ENCODE measurements at regions of chr10 and their contacts with region 1.

Region 1: DNA sequence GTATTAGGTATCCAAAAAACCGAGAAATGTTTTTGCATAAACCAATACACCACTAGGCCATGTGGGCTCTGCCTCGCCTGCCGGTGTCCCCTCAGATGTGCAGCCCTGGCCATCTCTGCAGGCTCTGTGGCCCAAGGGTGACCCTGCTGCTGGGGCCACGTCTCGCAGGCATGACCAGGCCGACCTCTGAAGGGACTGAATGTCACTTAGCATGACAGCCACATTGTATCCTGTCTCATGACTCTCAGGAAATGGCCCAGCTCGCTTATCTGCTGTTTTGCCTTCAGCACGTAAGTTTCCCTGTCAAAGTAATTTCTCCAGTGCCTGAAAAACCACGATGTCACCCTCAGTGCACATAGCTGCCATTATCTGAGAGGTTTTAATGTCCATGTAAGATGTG is 49.5 kb upstream of the ZNF32 start:
- DNase-seq: no peak
- ATAC-seq: peak; percentile 39 to 59 (median 50)
- H3K4me3 ChIP-seq: no peak overlapping the region
- H3K27ac ChIP-seq: peak overlapping the region in 5 of 10 donors; percentile 30 to 59 (median 49)
- H3K4me1 ChIP-seq: peaks cover 10 to 73% (median 35%) of the 10 kb centered on the region in 9 donors
- H3K27me3 ChIP-seq: no peaks in the 10 kb centered on the region
- CTCF ChIP-seq: no peak

Region 2: GRCh38 chr10:43380610-43381222 is 317.4 kb before region 1 on chr10:
- intact Hi-C with region 1: no loop called
- DNase-seq: no peak
- ATAC-seq: no peak
- H3K4me3 ChIP-seq: no peak overlapping the region
- H3K27ac ChIP-seq: no peak overlapping the region
- H3K4me1 ChIP-seq: peaks cover 0 to 11% (median 0%) of the 10 kb centered on the region in 9 donors
- H3K27me3 ChIP-seq: no peaks in the 10 kb centered on the region
- CTCF ChIP-seq: no peak

Region 3: DNA sequence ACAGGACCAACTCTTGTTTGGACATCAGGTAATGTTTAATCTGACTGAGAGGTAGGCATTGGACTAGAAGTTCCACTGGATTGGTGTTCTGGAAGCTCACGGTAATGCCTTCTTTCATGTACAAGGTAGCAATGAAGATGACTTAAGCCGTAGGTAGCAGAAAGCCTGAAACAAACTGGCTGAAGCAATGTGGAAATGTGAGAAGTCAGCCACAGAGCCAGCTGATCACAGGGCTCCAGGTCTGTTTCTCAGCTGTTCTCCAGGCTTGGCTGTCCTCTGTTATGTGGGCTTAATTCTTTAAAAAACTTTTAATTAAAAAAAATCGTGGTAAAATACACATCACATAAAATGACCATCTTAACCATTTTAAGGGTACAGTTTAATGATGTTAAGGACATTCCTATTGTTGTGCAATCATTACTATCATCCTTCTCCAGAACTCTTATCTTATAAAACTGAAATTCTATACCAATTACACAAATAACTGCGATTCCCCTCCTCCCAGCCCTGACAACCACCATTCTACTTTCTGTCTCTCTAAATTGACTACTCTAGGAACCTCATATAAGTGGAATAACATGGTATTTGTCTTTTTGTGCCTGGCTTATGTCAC is 51.9 kb after region 1 on chr10:
- intact Hi-C with region 1: loop called in 1 of 10 experiments (anchors 5 kb)
- DNase-seq: no peak
- ATAC-seq: no peak
- H3K4me3 ChIP-seq: no peak overlapping the region
- H3K27ac ChIP-seq: no peak overlapping the region
- H3K4me1 ChIP-seq: peaks cover 0 to 22% (median 3%) of the 10 kb centered on the region in 9 donors
- H3K27me3 ChIP-seq: no peaks in the 10 kb centered on the region
- CTCF ChIP-seq: no peak